H1 (cell line): ENCODE measurements at regions of chr3 and their contacts with region 1.

Region 1: DNA sequence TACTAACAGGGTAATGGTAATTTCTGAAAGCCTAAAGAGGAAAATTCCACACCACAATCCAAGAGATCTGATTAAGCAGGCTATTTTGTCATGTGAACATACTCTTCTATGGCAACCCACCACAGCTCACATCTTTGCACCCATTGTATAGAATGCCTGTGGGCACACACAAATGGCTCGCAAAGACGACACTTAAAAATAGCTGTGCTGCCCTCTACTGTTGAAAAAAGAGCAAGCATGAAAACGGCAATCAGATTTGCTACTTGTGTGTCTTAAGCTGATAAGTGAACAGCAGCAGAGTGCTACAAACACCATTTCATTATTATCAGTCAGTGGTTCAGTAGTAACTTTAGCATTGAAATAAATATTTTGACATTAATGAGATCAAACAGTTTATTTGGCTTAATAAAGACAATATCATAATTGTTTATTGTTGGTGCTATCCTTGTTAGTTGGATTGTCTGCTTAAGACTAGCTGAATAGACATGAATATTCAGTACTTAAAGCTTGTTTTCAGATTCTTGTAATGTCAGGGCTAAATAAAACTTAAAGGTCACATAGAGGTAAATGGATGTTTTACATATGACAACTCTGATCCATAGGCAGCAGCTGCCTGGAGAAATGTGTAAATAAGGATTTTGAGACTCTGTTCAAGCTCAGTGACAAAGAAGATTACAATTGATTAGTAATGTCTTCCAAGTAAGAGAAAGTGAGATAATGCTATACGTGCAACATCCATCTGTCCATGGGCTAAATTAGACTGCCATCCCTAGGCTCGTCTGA is 199.1 kb downstream of the LRRN1 start:
- DNase-seq: peak; percentile 23 to 60
- H3K4me3 ChIP-seq: no peak overlapping the region
- H3K27ac ChIP-seq: no peak overlapping the region
- H3K4me1 ChIP-seq: peaks cover 0 to 5% (median 1%) of the 10 kb centered on the region in 4 experiments; a peak in 1 of 7 replicates
- H3K27me3 ChIP-seq: no peaks in the 10 kb centered on the region
- CTCF ChIP-seq: peak in 2 of 3 experiments; percentile 58 to 83; a peak in 3 of 4 replicates
- EP300 ChIP-seq: no peak
- POLR2A ChIP-seq: no peak
- RAD21 ChIP-seq: peak; percentile 88 to 94

Region 2: DNA sequence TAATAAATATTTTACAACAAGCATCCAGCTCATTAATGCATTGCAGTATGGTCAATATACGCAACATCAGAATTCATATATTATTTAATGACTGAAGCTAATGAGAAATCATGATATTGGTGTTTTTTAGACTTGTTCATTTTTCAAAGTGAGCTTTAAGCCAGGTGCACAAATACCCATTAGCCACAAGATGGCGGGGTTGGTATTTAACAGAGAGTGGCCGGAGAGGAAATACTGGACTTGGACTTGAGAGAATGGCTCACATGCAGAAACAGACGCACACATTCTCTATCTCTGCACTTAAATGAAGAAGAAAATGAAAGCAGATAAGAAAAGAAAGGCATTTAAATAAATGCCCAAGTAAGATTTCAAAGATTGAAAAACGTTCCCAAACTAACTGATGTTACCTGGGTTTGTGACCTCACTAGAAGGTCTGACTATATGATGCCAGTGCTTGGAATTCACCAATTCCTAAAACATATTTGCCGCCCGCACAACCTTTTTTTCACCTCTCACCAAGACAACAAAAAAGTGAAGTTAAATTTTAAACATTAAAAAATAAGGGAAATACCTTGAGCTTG is 797.6 kb before region 1 on chr3:
- CTCF ChIA-PET with region 1: interaction called, 19 read pairs
- POLR2A ChIA-PET with region 1: no interaction called
- DNase-seq: no peak
- H3K4me3 ChIP-seq: no peak overlapping the region
- H3K27ac ChIP-seq: no peak overlapping the region
- H3K4me1 ChIP-seq: no peaks in the 10 kb centered on the region; a peak in 1 of 7 replicates
- H3K27me3 ChIP-seq: no peaks in the 10 kb centered on the region
- CTCF ChIP-seq: peak in 2 of 3 experiments; percentile 62 to 74; a peak in 3 of 4 replicates
- EP300 ChIP-seq: no peak
- POLR2A ChIP-seq: no peak
- RAD21 ChIP-seq: peak; percentile 95

Region 3: DNA sequence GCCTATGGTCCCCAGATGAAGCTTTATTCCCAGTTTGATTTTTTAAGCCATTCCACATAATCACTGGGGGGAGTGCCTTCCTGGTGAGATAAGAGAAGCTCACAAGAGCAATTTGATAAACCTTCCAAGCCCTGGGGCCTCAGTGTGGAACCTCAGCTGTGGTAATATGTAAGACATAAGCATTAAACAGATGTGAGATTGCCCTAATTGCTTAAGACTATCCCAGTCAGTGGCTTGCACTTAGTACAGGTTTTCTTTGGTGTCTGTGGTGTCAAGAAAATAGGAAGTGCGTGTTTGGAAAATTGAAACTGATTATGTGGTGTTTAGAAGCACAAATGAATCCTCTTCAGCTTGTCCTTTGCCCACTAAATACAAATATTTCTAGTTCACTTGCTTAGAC is 144.8 kb before region 1 on chr3:
- CTCF ChIA-PET with region 1: interaction called, 12 read pairs
- POLR2A ChIA-PET with region 1: interaction called, 3 read pairs
- DNase-seq: no peak
- H3K4me3 ChIP-seq: no peak overlapping the region
- H3K27ac ChIP-seq: no peak overlapping the region
- H3K4me1 ChIP-seq: peaks cover 0 to 12% (median 8%) of the 10 kb centered on the region in 4 experiments; a peak in 4 of 7 replicates
- H3K27me3 ChIP-seq: no peaks in the 10 kb centered on the region
- CTCF ChIP-seq: no peak
- EP300 ChIP-seq: no peak
- POLR2A ChIP-seq: no peak; a peak in 1 of 3 replicates
- RAD21 ChIP-seq: no peak

Region 4: DNA sequence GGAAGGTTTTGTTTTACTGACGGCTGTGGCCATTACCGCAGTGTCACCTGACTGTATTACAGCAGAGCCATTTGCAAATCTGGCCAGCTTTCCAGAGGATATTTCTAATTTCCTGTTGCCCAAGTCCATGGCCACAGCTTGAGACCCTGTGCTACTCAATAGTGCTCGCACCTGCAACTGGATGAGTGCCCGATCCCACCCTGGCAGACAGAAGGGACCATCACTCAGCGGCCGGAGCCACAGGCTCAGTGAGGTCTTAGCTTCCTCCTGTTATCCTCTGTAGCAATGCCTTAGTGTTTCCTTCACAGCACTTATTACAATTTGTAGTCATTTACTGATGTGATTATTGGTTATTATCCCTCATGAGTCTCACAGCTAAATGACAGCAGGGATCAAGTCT is 14.3 kb before region 1 on chr3:
- CTCF ChIA-PET with region 1: interaction called, 36 read pairs
- POLR2A ChIA-PET with region 1: no interaction called
- DNase-seq: no peak
- H3K4me3 ChIP-seq: no peak overlapping the region
- H3K27ac ChIP-seq: no peak overlapping the region
- H3K4me1 ChIP-seq: no peaks in the 10 kb centered on the region
- H3K27me3 ChIP-seq: no peaks in the 10 kb centered on the region
- CTCF ChIP-seq: no peak
- EP300 ChIP-seq: no peak
- POLR2A ChIP-seq: no peak
- RAD21 ChIP-seq: no peak

Region 5: DNA sequence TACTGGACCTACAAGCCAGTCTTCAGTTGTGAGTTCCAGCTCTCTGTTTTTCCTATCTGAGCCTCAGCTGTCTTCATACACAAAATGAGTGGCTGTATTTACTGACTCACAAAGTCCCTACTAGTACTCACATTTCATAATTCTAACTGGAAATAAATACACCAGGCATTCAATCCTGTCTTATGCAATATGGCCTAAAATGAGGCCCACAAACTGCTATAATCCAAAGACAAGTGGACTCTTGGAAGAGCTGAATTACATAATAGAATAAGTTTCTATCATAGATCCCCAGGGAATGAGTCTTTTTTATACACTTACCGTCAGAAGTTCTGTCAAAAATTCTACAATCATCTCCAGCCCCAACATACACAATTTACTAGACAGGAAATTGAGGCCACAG is 12.8 kb after region 1 on chr3:
- CTCF ChIA-PET with region 1: interaction called, 20 read pairs
- POLR2A ChIA-PET with region 1: no interaction called
- DNase-seq: no peak
- H3K4me3 ChIP-seq: no peak overlapping the region
- H3K27ac ChIP-seq: no peak overlapping the region
- H3K4me1 ChIP-seq: no peaks in the 10 kb centered on the region
- H3K27me3 ChIP-seq: no peaks in the 10 kb centered on the region
- CTCF ChIP-seq: no peak
- EP300 ChIP-seq: no peak
- POLR2A ChIP-seq: no peak
- RAD21 ChIP-seq: no peak

Region 6: DNA sequence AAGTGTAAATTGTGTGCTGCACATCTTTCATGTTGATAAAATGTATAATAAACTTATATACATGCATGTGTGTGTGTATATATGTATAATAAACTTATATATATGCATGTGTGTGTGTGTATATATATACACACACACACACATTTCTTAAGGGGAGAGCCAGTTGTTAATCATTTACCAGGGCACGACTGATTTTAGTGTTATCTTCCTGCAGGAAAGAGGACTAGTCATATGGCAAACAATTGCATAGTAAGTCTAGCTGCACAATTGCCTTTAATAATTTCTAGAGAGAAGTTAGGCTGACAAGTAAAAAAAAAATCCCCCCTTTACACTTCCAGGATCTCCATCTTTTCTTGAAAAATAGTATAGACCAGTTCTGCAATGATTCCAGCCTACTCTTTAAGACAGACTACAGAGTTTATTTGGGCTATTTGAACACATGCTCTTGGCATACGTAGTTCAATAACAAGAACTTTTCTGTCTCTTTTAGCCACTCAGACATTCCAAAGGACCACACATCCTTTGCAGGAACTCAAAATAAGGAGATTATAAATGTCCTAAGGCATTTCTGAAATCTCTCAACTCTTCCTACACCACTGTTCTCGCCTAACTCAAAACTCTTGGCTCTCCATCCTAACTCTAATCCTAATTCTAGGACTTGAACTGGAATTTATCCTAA is 141.3 kb after region 1 on chr3:
- CTCF ChIA-PET with region 1: no interaction called
- POLR2A ChIA-PET with region 1: no interaction called
- DNase-seq: no peak
- H3K4me3 ChIP-seq: no peak overlapping the region
- H3K27ac ChIP-seq: no peak overlapping the region
- H3K4me1 ChIP-seq: no peaks in the 10 kb centered on the region
- H3K27me3 ChIP-seq: no peaks in the 10 kb centered on the region
- CTCF ChIP-seq: no peak
- EP300 ChIP-seq: no peak
- POLR2A ChIP-seq: no peak
- RAD21 ChIP-seq: no peak

Region 7: GRCh38 chr3:4292301-4292700 is 294.0 kb after region 1 on chr3:
- CTCF ChIA-PET with region 1: interaction called, 16 read pairs
- POLR2A ChIA-PET with region 1: no interaction called
- DNase-seq: no peak
- H3K4me3 ChIP-seq: no peak overlapping the region
- H3K27ac ChIP-seq: no peak overlapping the region
- H3K4me1 ChIP-seq: no peaks in the 10 kb centered on the region
- H3K27me3 ChIP-seq: no peaks in the 10 kb centered on the region
- CTCF ChIP-seq: no peak
- EP300 ChIP-seq: no peak
- POLR2A ChIP-seq: no peak
- RAD21 ChIP-seq: no peak